ENCODE measurements at regions of chr3 and their contacts with region 1.

Region 1: GRCh38 chr3:153026026-153026425 is 136.0 kb upstream of the RAP2B start:
- DNase-seq: no peak
- H3K4me3 Mint-ChIP-seq: no peak overlapping the region
- H3K27ac Mint-ChIP-seq: no peak overlapping the region
- H3K4me1 Mint-ChIP-seq: no peaks in the 10 kb centered on the region
- H3K27me3 Mint-ChIP-seq: peaks cover 3% of the 10 kb centered on the region

Region 2: DNA sequence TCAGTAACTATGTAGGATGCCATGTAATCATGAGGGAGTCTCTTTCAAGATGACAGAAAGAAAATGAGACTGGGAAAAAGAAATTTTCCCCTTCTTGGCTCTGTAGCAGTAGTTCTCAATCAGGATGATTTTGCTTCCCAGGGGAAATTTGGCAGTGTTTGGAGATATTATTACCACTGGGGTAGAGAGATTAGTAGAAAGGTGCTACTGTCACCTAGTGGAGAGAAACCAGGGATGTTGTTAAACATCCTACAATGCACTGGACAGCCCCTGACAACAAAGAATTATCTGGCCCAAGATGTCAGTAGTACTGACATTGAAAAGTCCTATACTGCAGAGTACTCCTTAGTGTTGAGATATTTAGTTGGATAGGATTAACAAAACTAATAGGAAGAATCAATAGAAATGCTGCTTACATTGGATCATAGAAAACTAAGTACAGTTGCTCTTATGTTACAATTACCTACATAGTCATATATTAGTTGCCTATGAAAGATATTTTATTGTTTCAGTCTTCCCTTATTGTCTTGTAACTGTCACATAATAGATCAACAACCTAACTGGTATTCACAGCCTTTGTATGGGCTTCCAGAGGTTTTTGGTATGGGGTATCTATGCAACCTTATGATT is 569.3 kb after region 1 on chr3:
- CTCF ChIA-PET with region 1: interaction called, 3 read pairs
- intact Hi-C with region 1: loop called (anchors 1 kb)
- DNase-seq: no peak
- H3K4me3 Mint-ChIP-seq: no peak overlapping the region
- H3K27ac Mint-ChIP-seq: no peak overlapping the region
- H3K4me1 Mint-ChIP-seq: peaks cover 4% of the 10 kb centered on the region
- H3K27me3 Mint-ChIP-seq: no peaks in the 10 kb centered on the region

Region 3: DNA sequence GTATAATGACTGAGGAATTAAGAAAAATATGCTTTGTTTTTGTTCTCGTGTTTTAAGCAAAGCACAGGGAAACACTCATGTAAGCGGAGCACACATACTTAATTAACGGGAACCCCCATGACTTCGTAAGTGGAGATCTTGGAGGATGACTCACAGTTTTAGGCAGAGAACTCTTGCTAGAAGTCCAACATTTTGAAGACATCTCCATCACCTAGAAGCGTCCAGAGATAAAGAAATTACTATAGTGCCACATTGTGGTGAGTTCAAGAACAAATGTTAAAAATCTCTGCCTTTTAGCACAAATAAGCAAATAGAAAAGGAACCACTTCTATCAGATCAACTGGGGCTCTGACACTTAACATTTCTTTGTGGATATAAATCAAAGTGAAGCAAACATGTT is 901.1 kb after region 1 on chr3:
- CTCF ChIA-PET with region 1: no interaction called
- intact Hi-C with region 1: loop called (anchors 2 kb)
- DNase-seq: no peak
- H3K4me3 Mint-ChIP-seq: no peak overlapping the region
- H3K27ac Mint-ChIP-seq: no peak overlapping the region
- H3K4me1 Mint-ChIP-seq: no peaks in the 10 kb centered on the region
- H3K27me3 Mint-ChIP-seq: peaks cover 5% of the 10 kb centered on the region

Region 4: GRCh38 chr3:154018100-154018696 is 992.2 kb after region 1 on chr3:
- CTCF ChIA-PET with region 1: no interaction called
- intact Hi-C with region 1: loop called (anchors 1 kb)
- DNase-seq: peak; percentile 38
- H3K4me3 Mint-ChIP-seq: no peak overlapping the region
- H3K27ac Mint-ChIP-seq: no peak overlapping the region
- H3K4me1 Mint-ChIP-seq: no peaks in the 10 kb centered on the region
- H3K27me3 Mint-ChIP-seq: no peaks in the 10 kb centered on the region

Measured in activated naive CD4-positive, alpha-beta T cell treated with anti-CD3 and anti-CD28 coated beads for 36 hours (primary cell).